Cardiac septum (tissue), 1 donor: ENCODE measurements at regions of chr1 and their contacts with region 1.

Region 1: GRCh38 chr1:46527474-46528296 is 23.8 kb downstream of the KNCN start:
- DNase-seq: peak; percentile 89

Region 2: GRCh38 chr1:46394108-46394871 is 133.4 kb before region 1 on chr1 and contains the start of gene FAAH:
- intact Hi-C with region 1: no loop called
- DNase-seq: no peak
- total RNA-seq, gene FAAH: 0.97 TPM

Region 3: DNA sequence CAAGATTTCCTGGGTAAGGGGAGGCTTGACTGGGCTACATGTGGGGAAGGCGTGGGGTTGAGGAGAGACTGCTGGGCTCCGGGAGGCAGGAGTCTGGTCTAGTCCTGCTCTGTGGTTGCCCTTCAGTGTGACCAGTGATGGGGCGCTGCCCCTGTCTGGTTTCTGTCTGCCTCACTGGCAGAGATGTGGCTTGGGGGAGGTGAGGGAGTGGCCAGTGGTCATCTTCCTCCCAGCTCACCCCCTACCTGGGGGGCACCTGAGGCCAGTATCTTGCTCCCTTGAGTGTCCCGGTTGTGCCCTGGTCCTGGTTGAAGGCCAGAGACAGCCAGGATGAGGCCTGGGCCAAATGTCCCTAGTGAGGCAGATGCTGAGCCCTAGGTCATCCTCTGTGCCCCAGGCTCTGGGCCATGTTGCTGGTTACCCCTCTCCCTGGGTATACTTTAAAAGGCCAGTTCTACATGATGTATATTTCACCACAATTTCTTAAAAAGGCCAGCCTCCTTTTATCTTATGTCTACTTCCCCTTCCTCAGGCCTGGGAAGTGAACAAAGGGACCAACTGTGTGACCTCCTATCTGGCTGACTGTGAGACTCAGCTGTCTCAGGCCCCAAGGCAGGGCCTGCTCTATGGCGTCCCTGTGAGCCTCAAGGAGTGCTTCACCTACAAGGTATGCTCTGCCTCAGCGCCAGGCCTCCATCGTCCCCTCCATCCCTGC is 123.0 kb before region 1 on chr1:
- intact Hi-C with region 1: loop called (anchors 2 kb)
- DNase-seq: no peak

Region 4: DNA sequence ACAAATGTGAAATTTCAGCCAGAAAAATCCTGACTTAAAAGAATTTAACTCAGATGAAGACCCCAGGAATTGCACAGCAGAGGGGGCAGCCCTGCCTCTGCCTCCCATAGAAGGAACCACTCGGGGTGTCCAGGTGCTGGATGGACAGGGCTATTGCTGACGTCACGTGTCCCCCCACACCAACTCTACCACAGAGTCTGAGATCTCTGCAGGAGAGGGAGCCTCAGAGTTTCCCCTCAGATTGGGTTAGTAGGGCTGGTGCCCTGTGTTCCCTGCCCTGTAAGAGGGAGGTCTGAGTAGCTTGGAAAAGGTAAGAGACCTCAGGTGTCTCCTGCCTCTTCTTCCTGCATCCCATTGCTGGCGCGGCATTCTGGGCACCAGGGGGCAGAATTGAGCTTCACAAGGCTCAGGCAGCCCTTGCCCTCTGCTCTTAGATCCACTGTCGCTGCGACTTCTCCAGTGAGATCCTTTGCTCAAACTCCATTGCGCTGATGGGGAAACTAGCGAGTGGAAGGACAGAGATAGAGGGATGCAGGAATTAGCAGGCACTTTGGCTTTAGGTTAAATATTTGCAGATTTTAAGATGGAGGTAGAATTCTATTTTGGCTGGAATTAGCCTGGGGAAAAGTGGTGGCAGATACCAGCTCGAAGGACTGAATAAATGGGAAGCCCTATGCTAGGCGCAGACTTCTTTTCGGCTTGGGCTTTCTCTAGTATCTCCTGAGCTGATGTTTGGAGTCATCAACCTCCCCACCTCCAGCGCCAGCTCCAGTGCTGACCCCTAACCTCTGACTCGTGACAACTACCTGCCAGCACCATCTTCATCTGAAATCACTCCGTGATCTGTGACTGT is 80.8 kb before region 1 on chr1:
- intact Hi-C with region 1: loop called (anchors 1 kb)
- DNase-seq: peak; percentile 86

Region 5: GRCh38 chr1:46477153-46477929 is 50.3 kb before region 1 on chr1:
- intact Hi-C with region 1: loop called (anchors 1 kb)
- DNase-seq: peak; percentile 85

Region 6: DNA sequence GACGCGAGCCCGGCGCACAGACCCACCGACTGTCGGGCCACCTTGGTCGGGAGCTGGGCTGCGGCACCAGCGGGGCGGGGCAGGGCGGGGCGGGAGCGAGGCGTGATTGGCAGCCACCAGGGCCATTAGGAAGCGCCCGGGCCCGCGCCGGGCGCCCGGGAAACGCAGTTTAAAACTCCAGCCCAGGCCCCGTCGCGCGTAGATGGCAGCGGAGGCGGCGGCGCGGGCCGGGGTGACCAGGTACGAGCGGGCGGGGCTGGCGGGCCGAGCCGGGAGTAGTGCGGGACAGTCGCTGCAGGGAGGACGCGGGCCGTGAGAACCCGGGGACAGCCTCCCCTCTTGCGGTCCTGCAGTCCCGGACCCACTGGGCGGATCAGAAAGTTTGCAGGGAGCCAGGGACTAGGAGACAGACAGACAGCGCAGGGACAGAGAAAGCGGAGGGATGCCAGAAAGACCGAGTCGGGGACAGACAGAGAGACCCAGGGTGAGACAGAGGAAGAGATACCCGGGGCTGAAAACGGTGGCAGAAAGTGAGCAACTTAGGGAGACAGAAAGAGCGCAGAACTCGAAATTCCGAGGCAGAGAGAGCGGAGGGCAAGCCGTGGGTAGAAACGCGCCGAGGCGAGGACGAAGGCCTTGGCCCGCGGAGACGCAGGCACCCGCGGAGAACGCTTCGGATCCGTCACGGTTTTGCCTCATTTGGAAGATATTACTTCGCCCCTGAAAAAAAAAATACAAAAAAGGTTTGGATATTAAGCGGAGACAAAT is 37.9 kb before region 1 on chr1 and contains the start of gene DMBX1:
- intact Hi-C with region 1: no loop called
- DNase-seq: no peak
- total RNA-seq, gene DMBX1: not detected

Region 7: DNA sequence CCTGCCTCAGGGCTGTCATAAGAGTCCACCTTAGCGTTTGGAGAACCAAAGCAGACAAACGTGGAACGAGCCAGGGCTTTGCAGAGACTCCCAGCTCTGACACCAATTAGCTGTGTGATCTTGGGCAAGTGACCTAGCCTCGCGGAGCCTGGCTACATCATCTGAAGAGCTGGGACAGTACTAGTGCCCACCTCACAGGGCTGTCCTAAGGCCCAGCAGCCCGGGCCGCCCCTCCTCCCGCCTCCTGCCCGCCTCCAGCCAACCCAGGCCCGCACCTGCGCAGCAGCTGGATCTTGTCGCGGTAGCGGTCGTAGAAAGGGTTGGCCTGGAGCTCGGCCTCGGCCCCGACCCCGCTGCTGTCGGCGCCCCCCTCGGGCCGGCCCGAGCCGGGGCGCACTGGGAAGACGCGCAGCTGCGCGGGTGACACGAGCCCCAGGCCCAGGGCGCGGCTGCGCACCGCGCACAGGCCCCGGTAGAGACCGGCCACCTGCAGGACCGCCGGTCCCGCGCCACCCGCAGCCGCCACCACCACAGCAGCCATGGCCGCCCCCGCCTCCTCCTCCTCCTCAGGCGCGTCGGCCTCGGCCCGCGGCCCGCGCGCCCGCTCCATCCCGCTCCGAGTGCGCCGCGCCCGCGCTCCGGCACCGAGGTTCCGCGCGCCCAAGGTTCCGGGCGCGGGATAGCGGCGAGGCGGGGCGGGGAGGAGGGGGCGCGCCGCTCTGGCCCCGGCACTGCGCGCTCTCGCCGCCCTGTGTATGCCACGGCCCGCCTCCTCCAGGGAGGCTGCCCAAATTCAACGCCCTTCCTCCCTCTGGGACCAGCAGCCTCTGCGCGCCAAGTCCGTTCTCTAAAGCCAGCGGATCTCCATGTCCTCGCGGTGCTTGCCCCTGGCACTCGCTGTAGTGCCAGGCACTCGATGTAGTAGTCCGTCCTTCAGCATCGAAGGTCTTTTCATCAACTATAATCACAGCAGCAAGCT is 140.4 kb after region 1 on chr1 and contains the start of gene ATPAF1:
- intact Hi-C with region 1: loop called (anchors 5 kb)
- DNase-seq: peak; percentile 83
- total RNA-seq, gene ATPAF1: 190 TPM

Region 8: GRCh38 chr1:46724991-46725735 is 197.5 kb after region 1 on chr1:
- intact Hi-C with region 1: loop called (anchors 2 kb)
- DNase-seq: no peak